ENCODE measurements at regions of chr16 and their contacts with region 1.

Region 1: GRCh38 chr16:27154705-27155521 is 48.4 kb upstream of the KDM8 start:
- DNase-seq: peak in 2 of 3 donors; percentile 53 to 57
- H3K4me3 ChIP-seq: no peak overlapping the region
- H3K27ac ChIP-seq: no peak overlapping the region
- H3K4me1 ChIP-seq: peaks cover 0 to 17% (median 11%) of the 10 kb centered on the region in 4 experiments
- H3K27me3 ChIP-seq: no peaks in the 10 kb centered on the region

Region 2: GRCh38 chr16:27169511-27170071 is 14.7 kb after region 1 on chr16:
- CTCF ChIA-PET with region 1: interaction called, 33 read pairs
- POLR2A ChIA-PET with region 1: no interaction called
- DNase-seq: peak; percentile 76 to 94 (median 88)
- H3K4me3 ChIP-seq: no peak overlapping the region
- H3K27ac ChIP-seq: no peak overlapping the region
- H3K4me1 ChIP-seq: peaks cover 4 to 33% (median 21%) of the 10 kb centered on the region in 4 experiments
- H3K27me3 ChIP-seq: no peaks in the 10 kb centered on the region

Region 3: DNA sequence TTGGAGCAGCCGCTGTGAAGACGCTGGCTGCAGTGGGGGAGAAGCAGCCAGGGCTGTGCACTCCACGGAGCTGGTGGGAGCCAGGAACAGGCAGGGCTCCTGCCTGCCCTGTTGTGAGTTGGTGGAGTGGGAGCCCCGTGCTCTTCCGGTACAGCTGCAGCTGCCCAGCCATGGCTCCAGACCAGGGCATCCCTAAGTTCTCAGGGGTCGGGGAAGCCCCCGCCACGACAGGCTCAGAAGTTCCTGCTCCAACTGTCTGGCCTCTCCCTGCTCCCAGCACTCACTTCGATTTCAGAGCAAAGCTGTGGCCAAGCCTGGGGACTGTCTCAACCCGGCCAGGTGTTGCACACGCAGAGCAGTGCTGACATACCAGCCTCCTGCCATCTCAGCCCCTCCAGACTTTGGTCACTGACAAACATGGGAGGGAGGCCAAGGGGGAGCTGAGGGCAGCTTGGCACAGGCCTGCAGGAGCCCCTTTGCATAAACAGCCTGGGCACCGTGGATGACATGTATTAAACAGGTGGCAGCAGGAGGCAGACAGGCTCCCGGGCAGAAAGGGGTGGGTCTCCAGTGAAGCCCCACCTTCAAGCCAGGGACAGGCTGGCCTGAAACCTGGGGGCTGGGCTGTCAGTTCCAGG is 34.5 kb after region 1 on chr16:
- CTCF ChIA-PET with region 1: no interaction called
- POLR2A ChIA-PET with region 1: no interaction called
- DNase-seq: no peak
- H3K4me3 ChIP-seq: no peak overlapping the region
- H3K27ac ChIP-seq: no peak overlapping the region
- H3K4me1 ChIP-seq: no peaks in the 10 kb centered on the region
- H3K27me3 ChIP-seq: no peaks in the 10 kb centered on the region